ENCODE measurements at regions of chr20 and their contacts with region 1.

Region 1: DNA sequence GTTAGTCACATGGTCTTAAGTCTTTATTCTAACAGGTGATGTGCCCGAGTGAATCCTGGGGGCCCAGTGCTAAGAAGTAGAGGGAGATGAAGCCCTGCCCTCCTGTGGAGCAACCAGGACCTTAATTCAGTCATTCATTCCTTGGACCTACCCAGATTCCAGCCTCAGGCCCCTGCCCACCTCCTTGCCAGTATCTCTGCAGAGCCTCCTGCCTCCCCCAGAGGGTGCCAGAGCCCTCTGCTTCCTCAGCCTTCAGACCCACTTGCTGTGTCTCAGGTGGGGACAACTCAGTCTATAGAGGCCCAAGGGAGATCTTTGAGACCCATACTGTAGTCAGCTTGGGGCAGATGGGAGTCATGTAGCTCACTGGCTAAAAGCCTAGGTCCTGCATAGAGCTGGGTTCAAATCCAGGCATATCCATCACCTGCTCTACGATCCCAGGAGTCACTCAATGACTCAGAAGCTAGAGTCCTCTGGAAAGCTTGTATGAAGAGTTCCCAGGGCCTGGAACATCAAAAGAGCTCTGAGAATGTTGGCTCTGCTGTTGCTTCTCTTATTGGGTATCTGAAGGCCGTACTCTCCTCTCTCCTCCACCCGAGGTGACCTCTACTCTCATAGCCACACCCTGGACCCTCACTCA is 3.9 kb upstream of the SIGLEC1 start:
- H3K4me3 ChIP-seq: no peak overlapping the region
- H3K27ac ChIP-seq: 0 out of 2 replicates have a peak overlapping the region, but pooled peaks have one; percentile 18
- H3K4me1 ChIP-seq: no peaks in the 10 kb centered on the region
- CTCF ChIP-seq: peak; percentile 59; the same call in 1 of the 2 replicates

Region 2: DNA sequence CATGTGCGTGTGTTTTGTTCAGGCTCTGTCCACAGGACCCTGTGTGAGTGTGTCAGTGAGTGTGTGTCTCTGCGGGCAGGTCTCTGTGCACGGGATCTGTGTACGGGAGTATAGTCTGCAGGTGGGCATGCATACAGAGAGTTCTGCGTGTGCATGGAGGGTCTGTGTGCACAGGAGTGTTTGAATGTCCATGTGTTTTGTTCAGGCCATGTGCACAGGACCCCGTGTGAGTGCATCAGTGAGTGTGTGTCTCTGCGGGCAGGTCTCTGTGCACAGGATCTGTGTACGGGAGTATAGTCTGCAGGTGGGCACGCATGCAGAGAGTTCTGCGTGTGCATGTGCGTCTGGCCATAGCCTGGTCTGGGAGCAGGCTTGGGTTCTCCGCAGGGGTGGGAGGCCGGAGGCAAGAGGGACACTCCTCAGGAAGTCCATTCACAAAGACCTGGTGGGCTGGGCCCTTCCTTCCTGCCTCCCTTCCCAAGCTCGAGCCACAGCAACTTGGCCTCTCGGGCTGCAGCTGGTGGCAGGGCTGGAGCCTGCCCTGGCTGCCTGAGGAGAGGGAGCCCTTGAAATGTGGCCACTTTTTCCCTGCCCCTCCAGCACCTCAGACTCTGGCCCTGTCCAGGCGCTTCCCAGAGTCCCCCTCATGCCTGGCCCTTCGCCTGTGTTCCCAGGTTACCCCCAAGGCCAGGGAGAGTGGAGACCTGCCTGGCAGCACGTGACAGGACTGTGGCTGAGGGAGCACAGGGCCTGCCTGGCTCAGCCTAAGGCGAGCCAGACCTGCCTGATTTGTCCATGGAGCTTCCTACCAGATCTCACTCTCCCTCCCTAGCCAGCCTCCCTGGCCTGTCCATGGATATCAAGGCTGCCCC is 23.0 kb after region 1 on chr20:
- CTCF ChIA-PET with region 1: interaction called, 23 read pairs
- POLR2A ChIA-PET with region 1: no interaction called
- H3K4me3 ChIP-seq: no peak overlapping the region
- H3K27ac ChIP-seq: no peak overlapping the region
- H3K4me1 ChIP-seq: peaks cover 10% of the 10 kb centered on the region; the same call in 1 of the 2 replicates
- CTCF ChIP-seq: no peak

Region 3: GRCh38 chr20:3760655-3761348 is 44.5 kb after region 1 on chr20:
- CTCF ChIA-PET with region 1: interaction called, 18 read pairs
- POLR2A ChIA-PET with region 1: no interaction called
- H3K4me3 ChIP-seq: no peak overlapping the region
- H3K27ac ChIP-seq: no peak overlapping the region
- H3K4me1 ChIP-seq: no peaks in the 10 kb centered on the region
- CTCF ChIP-seq: no peak

Region 4: DNA sequence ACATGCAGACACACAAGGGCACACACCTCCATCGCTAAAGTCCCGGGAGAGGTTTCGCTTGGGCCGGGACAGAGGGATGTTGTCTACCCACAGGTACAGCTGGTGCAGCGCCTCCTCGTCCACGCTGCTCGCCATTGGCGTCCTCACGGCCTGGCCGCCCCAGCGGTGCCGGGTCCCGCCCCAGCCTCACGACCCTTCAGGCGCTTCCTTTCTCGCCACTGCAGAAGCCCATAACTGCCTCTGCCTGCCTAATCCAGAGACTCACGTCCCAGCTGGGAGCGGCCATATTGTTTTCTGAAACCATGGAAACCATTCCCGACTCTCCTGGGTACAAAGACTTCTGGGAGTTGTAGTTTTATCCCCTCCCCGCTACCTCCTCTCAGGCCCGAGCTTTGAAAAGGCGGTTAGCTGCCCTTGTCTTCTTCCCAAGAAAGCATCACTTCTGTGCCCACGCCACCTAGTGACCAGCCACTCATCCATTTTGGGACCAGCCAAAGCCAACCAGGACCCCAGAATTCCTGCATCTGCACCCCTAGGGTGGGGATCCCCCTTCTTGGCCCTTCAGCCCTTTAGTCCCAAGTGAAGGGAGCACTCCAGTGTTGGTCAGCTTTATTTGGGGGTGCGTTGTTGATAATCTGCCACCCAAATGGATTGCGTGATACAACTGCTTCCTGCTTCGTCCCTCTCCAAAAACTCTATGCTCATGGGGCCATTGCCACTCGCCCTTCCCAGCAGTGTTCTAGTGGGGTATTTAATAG is 65.0 kb after region 1 on chr20 and contains the start of gene SPEF1:
- CTCF ChIA-PET with region 1: interaction called, 18 read pairs
- POLR2A ChIA-PET with region 1: interaction called, 5 read pairs
- H3K4me3 ChIP-seq: peak within 1 kb of the TSS; percentile 41
- H3K27ac ChIP-seq: no peak within 1 kb of the TSS
- H3K4me1 ChIP-seq: peaks cover 13% of the 10 kb centered on the region; the same call in 1 of the 2 replicates
- CTCF ChIP-seq: peak; percentile 86

Region 5: DNA sequence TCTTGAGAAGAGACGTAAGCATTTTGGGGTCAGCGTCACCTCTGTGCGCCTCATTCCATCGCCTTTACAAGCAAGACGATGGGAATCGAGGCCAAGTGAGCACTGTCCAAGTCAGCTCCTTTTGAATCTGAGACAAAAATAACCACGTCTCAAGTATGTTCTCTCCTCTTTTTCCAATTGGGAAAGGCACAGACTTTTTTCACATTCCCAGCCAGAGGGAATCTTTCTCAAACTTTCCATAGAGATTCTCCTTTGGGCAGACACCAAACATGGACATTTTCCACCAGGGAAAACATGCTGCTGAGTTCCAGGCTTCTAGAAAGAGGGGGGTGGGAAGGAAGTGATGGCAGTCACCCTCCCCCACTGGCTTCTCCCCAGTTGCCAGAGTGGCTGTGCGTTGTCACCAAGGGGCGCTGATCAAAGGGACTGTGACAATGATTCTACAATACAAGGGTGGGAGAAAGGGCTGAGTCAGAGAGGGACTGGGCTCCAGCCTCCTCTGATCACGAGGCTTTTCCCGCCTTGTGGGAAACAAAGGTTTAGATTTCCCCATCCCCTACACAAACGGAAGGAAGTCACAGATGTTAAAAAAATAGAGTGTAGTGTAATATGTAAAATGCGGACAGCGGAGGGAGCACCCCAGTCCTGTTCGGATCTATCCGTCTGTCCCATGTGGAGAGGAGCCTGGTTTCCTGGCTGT is 581.0 kb after region 1 on chr20:
- CTCF ChIA-PET with region 1: no interaction called
- POLR2A ChIA-PET with region 1: no interaction called
- H3K4me3 ChIP-seq: no peak overlapping the region
- H3K27ac ChIP-seq: no peak overlapping the region
- H3K4me1 ChIP-seq: no peaks in the 10 kb centered on the region
- CTCF ChIP-seq: no peak

Measured in HEK293 (cell line).